ENCODE measurements at regions of chr2 and their contacts with region 1.

Region 1: GRCh38 chr2:165239230-165239629 is at the start of gene SCN2A:
- DNase-seq: no peak
- ATAC-seq: no peak
- H3K4me3 Mint-ChIP-seq: no peak within 1 kb of the TSS
- H3K27ac Mint-ChIP-seq: no peak within 1 kb of the TSS
- H3K4me1 Mint-ChIP-seq: no peaks in the 10 kb centered on the region
- H3K27me3 Mint-ChIP-seq: no peaks in the 10 kb centered on the region
- CTCF ChIP-seq: peak; percentile 67
- total RNA-seq, gene SCN2A: not detected

Region 2: GRCh38 chr2:165141601-165142354 is 97.5 kb before region 1 on chr2:
- CTCF ChIA-PET with region 1: no interaction called
- POLR2A ChIA-PET with region 1: no interaction called
- intact Hi-C with region 1: no loop called
- DNase-seq: no peak
- ATAC-seq: no peak
- H3K4me3 Mint-ChIP-seq: no peak overlapping the region
- H3K27ac Mint-ChIP-seq: no peak overlapping the region
- H3K4me1 Mint-ChIP-seq: no peaks in the 10 kb centered on the region
- H3K27me3 Mint-ChIP-seq: no peaks in the 10 kb centered on the region
- CTCF ChIP-seq: no peak

Region 3: DNA sequence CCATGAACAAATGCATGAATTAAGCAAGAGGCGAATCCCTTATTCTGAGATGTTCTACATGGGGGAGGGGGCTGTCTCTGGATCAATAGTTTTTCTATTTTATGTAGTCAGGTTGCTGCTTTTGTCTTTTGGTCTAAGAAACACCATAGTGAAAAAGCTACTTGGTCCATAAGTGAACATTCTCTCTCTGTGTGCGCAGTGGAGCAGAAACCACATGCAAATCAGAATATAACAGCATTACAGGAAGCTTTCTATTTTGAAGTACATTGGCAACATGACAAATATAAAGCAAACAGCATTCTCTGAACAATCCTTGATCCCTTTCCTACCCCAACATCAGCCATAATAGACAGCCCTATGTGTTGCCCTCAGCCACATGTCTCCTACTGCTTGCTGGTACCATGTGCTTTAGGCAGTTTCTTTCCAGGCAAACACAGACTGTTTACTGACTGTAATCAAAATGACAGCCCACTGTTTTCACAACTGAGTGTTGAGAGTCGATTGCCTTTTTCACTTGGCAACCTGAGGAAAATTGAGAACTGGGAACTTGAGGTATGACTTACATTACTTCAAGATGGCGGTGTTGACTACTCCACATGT is 46.0 kb before region 1 on chr2:
- CTCF ChIA-PET with region 1: no interaction called
- POLR2A ChIA-PET with region 1: no interaction called
- intact Hi-C with region 1: no loop called
- DNase-seq: no peak
- ATAC-seq: no peak
- H3K4me3 Mint-ChIP-seq: no peak overlapping the region
- H3K27ac Mint-ChIP-seq: no peak overlapping the region
- H3K4me1 Mint-ChIP-seq: no peaks in the 10 kb centered on the region
- H3K27me3 Mint-ChIP-seq: no peaks in the 10 kb centered on the region
- CTCF ChIP-seq: no peak

Region 4: GRCh38 chr2:165293440-165294353 is 54.5 kb after region 1 on chr2:
- CTCF ChIA-PET with region 1: interaction called, 10 read pairs
- POLR2A ChIA-PET with region 1: no interaction called
- intact Hi-C with region 1: no loop called
- DNase-seq: peak; percentile 49
- ATAC-seq: peak; percentile 100
- H3K4me3 Mint-ChIP-seq: no peak overlapping the region
- H3K27ac Mint-ChIP-seq: no peak overlapping the region
- H3K4me1 Mint-ChIP-seq: peaks cover 5% of the 10 kb centered on the region
- H3K27me3 Mint-ChIP-seq: peaks cover 7% of the 10 kb centered on the region
- CTCF ChIP-seq: peak; percentile 72

Region 5: DNA sequence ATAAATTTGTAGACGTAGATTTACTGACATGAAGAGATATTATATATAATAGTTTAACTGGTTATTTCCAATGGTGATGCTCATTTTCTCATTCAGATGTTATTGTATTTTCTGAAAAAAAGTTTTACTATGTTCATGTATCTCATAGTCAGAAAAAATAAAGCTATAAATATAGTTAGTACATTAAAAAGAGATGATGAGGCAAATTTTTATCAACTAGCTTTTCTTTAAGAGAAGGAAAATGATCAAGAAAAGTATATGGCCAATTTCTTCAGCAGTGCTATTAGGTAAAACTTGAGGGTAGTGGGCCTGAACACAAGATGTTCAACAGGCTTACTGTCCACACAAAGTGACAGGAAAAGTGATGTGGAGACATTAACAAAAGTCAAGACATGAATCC is 702.6 kb after region 1 on chr2:
- CTCF ChIA-PET with region 1: no interaction called
- POLR2A ChIA-PET with region 1: no interaction called
- intact Hi-C with region 1: no loop called
- DNase-seq: no peak
- ATAC-seq: no peak
- H3K4me3 Mint-ChIP-seq: no peak overlapping the region
- H3K27ac Mint-ChIP-seq: no peak overlapping the region
- H3K4me1 Mint-ChIP-seq: peaks cover 4% of the 10 kb centered on the region
- H3K27me3 Mint-ChIP-seq: no peaks in the 10 kb centered on the region
- CTCF ChIP-seq: no peak

Measured in activated CD8-positive, alpha-beta T cell treated with anti-CD3 and anti-CD28 coated beads for 36 hours (primary cell).